ENCODE measurements at regions of chr10 and their contacts with region 1.

Region 1: DNA sequence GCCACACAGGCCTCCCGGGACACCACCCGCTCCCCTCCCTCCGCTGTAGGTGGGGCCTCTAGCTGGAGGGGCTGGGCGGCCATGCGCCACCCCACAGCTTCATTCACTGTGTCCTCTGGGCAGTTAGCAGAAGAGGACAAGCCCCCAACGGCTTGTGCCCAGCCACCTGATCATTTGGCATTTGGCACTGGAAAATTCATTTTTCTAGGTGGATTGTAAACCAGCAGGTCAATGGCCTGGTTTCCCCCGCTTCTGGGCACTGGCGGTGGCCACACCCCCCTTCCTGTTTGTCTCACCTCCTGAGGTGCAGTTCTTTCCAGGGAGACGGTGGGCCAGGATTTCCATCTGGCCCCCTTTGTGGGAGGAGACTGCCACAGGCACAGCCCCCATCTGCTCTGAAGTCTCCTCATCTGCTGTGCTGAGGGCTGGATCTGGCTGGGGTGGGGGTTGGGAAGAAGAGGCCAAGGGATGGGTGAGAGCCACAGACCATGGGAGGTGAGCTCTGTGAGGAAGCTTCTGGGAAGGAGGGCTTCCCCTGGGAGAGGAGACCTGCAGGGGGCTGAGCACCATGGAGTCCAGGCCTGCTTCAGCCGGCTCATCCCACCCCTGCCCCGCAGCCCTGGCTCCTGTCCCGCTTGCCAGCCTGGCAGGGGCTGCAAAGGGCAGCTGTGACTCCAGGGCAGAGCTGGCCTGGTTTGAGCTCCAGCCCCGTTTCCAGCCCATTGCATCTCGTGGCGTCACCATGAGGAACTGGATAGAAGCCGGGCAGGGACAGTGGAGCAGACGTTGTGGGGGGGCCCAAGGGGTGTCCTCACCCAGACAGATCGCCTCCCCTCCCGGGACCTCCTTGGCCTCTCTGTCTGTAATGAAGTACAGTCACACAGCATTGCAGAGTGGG is 40.1 kb upstream of the SLC29A3 start:
- DNase-seq: no peak
- ATAC-seq: no peak

Region 2: DNA sequence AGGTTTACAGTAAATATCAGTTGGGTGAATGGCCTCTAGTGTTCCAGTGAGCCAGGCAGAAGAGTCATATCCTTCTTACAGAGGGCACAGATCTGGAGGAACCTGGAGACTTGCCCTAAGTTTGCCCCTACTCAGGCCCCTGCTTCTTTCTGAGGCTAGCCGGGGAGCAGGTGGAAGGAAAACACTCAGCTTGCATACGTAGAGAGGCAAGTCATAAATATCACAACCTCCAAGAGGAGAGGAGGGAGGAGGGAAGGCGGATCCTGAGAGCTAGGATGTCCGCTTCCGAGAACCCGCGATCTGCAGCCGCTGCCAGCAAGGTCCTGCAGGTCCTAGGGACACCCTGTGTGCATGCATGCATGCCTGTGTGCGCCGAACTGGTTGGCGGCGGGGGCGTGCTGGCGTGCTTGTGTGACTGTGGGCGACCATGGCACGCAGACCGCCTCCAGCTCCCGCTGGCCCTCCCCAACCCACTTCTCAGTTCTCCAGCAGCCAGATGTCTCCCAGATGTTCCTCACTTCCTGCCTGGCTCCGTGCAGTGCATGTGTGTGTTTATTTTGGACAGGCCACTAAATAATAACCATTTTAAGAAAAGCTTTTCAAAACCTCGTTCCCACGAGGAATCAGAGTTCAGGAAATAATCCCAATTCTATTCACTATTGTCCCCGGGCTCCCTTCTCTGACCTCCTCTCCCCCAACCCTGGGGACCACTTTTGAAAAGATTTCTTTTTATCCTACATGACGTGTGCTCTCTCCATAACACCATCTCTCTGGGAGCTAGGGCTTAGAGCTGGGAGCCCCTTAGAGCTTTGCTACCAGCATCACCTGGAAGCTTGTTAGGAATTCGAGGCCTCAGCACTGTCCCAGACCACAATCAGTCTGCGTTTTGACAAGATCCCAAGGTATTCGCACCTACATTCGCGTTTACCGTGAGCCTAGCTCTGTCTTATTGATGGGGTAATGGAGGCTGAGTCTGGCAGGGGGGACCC is 34.2 kb before region 1 on chr10:
- intact Hi-C with region 1: loop called (anchors 5 kb)
- DNase-seq: peak; percentile 77
- ATAC-seq: peak; percentile 66

Region 3: DNA sequence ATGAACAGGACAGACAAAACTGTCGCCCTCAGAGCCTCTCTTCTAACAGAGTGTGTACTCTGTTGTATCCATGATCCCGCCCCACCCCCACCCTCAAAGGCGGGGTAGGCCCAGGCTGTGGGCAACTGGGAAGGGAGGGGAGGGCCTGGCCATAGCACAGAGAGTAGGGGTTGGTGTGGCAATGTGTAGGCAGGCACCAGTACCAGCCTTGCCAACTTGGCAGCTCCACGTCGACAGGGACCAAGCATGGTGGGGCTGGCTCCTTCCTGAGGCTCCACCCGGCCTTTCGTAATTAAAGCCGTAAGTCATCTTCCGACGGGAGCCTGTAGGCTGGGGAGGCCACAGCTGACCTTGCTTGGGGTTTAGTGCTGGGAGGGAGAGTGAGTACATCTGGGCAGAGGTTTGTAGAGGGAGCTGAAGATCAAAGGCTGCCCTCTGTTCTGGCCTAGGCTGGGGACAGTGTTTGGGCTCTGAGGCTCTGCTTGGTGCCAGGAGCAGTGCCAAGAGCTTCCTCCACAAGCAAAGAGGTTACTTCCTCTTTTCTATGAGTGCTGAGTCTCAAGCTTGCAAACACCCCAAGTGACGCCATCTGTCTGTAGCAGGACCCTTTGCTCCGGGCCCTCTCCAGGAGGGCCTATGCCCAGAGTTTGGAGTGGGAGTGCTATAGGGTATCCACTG is 319.0 kb after region 1 on chr10:
- intact Hi-C with region 1: no loop called
- DNase-seq: peak; percentile 66
- ATAC-seq: peak; percentile 67